Activated CD4-positive, alpha-beta memory T cell treated with anti-CD3 and anti-CD28 coated beads for 36 hours (primary cell): ENCODE measurements at regions of chr12 and their contacts with region 1.

Region 1: GRCh38 chr12:122190842-122191668 is 8.1 kb downstream of the LRRC43 start:
- DNase-seq: peak; percentile 85
- H3K4me3 Mint-ChIP-seq: no peak overlapping the region
- H3K27ac Mint-ChIP-seq: no peak overlapping the region
- H3K4me1 Mint-ChIP-seq: no peaks in the 10 kb centered on the region
- H3K27me3 Mint-ChIP-seq: no peaks in the 10 kb centered on the region

Region 2: GRCh38 chr12:122130150-122130549 is 60.9 kb before region 1 on chr12:
- CTCF ChIA-PET with region 1: interaction called, 71 read pairs
- POLR2A ChIA-PET with region 1: no interaction called
- intact Hi-C with region 1: loop called (anchors 1 kb)
- DNase-seq: no peak
- H3K4me3 Mint-ChIP-seq: no peak overlapping the region
- H3K27ac Mint-ChIP-seq: no peak overlapping the region
- H3K4me1 Mint-ChIP-seq: peaks cover 2% of the 10 kb centered on the region
- H3K27me3 Mint-ChIP-seq: no peaks in the 10 kb centered on the region

Region 3: GRCh38 chr12:122159882-122160281 is 31.2 kb before region 1 on chr12:
- CTCF ChIA-PET with region 1: interaction called, 9 read pairs
- POLR2A ChIA-PET with region 1: no interaction called
- intact Hi-C with region 1: loop called (anchors 2 kb)
- DNase-seq: no peak
- H3K4me3 Mint-ChIP-seq: no peak overlapping the region
- H3K27ac Mint-ChIP-seq: no peak overlapping the region
- H3K4me1 Mint-ChIP-seq: peaks cover 10% of the 10 kb centered on the region
- H3K27me3 Mint-ChIP-seq: peaks cover 3% of the 10 kb centered on the region